Mammary epithelial cell (primary cell): ENCODE measurements at regions of chr4 and their contacts with region 1.

Region 1: GRCh38 chr4:89254847-89255246 is 52.8 kb downstream of the GPRIN3 start:
- DNase-seq: peak; percentile 17
- H3K4me3 ChIP-seq: no peak overlapping the region
- H3K27ac ChIP-seq: no peak overlapping the region
- H3K4me1 ChIP-seq: no peaks in the 10 kb centered on the region
- H3K27me3 ChIP-seq: peaks cover 2% of the 10 kb centered on the region
- CTCF ChIP-seq: peak; percentile 78 to 84

Region 2: GRCh38 chr4:89242864-89243732 is 11.7 kb before region 1 on chr4:
- CTCF ChIA-PET with region 1: no interaction called
- dilution Hi-C with region 1: no loop called
- in situ Hi-C with region 1: no loop called
- intact Hi-C with region 1: loop called (anchors 1 kb)
- DNase-seq: no peak
- H3K4me3 ChIP-seq: no peak overlapping the region
- H3K27ac ChIP-seq: no peak overlapping the region
- H3K4me1 ChIP-seq: no peaks in the 10 kb centered on the region
- H3K27me3 ChIP-seq: peaks cover 2% of the 10 kb centered on the region
- CTCF ChIP-seq: no peak